Naive thymus-derived CD4-positive, alpha-beta T cell (primary cell): ENCODE measurements at regions of chr7 and their contacts with region 1.

Region 1: GRCh38 chr7:42940985-42941847 is 9.0 kb downstream of the MRPL32 start:
- DNase-seq: peak; percentile 43 to 70 (median 63)
- ATAC-seq: peak; percentile 87
- H3K4me3 ChIP-seq: no peak overlapping the region
- H3K4me3 Mint-ChIP-seq: no peak overlapping the region
- H3K27ac ChIP-seq: no peak overlapping the region
- H3K27ac Mint-ChIP-seq: no peak overlapping the region
- H3K4me1 ChIP-seq: peaks cover 0 to 3% of the 10 kb centered on the region in 2 donors
- H3K4me1 Mint-ChIP-seq: peaks cover 1 to 26% (median 9%) of the 10 kb centered on the region in 7 donors
- H3K27me3 ChIP-seq: no peaks in the 10 kb centered on the region
- H3K27me3 Mint-ChIP-seq: peaks cover 0 to 5% (median 0%) of the 10 kb centered on the region in 5 donors

Region 2: GRCh38 chr7:43004082-43004481 is 62.9 kb after region 1 on chr7:
- CTCF ChIA-PET with region 1: no interaction called
- POLR2A ChIA-PET with region 1: no interaction called
- intact Hi-C with region 1: no loop called
- DNase-seq: peak in 2 of 9 donors; percentile 2 to 7
- ATAC-seq: no peak
- H3K4me3 ChIP-seq: no peak overlapping the region
- H3K4me3 Mint-ChIP-seq: peak overlapping the region in 1 of 10 donors; percentile 2
- H3K27ac ChIP-seq: no peak overlapping the region
- H3K27ac Mint-ChIP-seq: no peak overlapping the region
- H3K4me1 ChIP-seq: no peaks in the 10 kb centered on the region
- H3K4me1 Mint-ChIP-seq: peaks cover 0 to 7% (median 4%) of the 10 kb centered on the region in 7 donors
- H3K27me3 ChIP-seq: no peaks in the 10 kb centered on the region
- H3K27me3 Mint-ChIP-seq: peaks cover 11 to 37% (median 25%) of the 10 kb centered on the region in 5 donors

Region 3: GRCh38 chr7:43108255-43109011 is 167.2 kb after region 1 on chr7:
- CTCF ChIA-PET with region 1: no interaction called
- POLR2A ChIA-PET with region 1: no interaction called
- intact Hi-C with region 1: loop called in 1 of 2 experiments (anchors 1 kb)
- DNase-seq: peak in 3 of 9 donors; percentile 8 to 59 (median 11)
- ATAC-seq: peak; percentile 44
- H3K4me3 ChIP-seq: no peak overlapping the region
- H3K4me3 Mint-ChIP-seq: no peak overlapping the region
- H3K27ac ChIP-seq: no peak overlapping the region
- H3K27ac Mint-ChIP-seq: peak overlapping the region in 1 of 9 donors; percentile 26
- H3K4me1 ChIP-seq: no peaks in the 10 kb centered on the region
- H3K4me1 Mint-ChIP-seq: peaks cover 0 to 12% (median 5%) of the 10 kb centered on the region in 7 donors
- H3K27me3 ChIP-seq: peaks cover 0 to 5% of the 10 kb centered on the region in 2 donors
- H3K27me3 Mint-ChIP-seq: peaks cover 59 to 67% (median 61%) of the 10 kb centered on the region in 5 donors

Region 4: DNA sequence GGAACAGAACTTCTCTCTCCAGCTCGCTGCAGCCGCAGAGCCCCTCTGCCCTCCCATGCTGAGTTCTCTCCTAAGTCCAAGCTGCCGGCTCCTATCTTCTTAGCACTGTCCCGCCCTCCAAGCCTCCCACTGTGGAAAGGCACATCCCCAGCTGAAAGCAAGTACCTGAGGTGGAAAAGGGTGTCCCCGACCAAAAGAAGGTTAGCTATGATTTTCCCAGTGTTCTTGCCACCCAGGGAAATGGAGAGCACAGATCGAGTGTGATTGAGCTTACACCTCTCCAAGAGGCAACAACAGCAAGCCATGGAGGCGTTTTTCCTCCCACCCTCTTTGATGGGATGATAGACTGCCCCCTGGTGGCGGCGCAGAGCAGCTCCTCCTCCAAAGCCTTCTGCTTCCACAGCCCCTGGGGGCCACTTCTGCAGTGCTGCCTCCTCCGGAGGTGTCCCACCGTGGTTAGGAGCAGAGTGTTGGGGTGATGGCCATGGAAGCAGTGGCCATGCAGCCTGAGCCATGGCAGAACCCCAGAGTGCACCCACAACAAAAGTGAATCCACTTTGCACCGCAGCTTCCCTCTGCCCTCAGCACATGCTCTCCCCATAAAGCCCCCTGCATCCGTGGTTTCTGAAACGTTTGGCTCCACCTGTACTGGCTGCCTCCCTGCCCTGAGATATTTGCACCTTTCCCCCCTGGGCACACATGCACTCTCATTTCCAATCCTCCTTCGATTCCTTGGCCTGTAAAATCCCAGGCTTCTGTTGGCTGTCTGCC is 498.6 kb after region 1 on chr7:
- CTCF ChIA-PET with region 1: no interaction called
- POLR2A ChIA-PET with region 1: no interaction called
- intact Hi-C with region 1: loop called (anchors 1 to 10 kb)
- DNase-seq: peak in 6 of 9 donors; percentile 3 to 65 (median 18)
- ATAC-seq: peak; percentile 76
- H3K4me3 ChIP-seq: no peak overlapping the region
- H3K4me3 Mint-ChIP-seq: no peak overlapping the region
- H3K27ac ChIP-seq: no peak overlapping the region
- H3K27ac Mint-ChIP-seq: no peak overlapping the region
- H3K4me1 ChIP-seq: no peaks in the 10 kb centered on the region
- H3K4me1 Mint-ChIP-seq: peaks cover 0 to 4% (median 2%) of the 10 kb centered on the region in 7 donors
- H3K27me3 ChIP-seq: no peaks in the 10 kb centered on the region
- H3K27me3 Mint-ChIP-seq: peaks cover 0 to 7% (median 0%) of the 10 kb centered on the region in 5 donors

Region 5: DNA sequence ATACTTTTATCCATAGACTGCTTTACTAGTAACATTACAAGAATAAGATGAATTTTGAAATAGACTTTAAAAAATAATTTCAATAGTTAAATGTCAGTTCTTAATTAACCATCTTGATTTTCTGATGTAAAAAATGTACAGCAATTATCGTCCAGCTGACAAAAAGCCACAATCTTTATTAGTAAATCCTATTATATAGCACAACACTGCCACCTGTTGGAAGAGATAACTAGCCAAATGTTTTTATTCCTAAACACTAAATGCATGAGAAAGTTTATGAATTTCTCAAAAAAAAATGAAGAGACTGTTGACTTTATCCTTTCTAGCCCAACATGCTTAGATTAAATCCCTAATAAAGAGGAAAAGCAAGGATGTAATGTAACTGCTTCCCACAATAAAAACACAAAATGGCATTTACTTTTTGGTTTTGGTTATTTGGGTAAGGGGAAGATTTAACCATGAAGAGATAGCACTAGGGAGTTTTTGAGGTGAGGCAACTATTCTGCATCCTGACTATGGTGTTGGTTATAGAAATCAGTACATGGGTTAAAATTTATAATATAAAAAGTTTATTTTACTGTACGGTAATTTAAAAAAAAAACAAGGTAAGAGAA is 780.1 kb after region 1 on chr7:
- CTCF ChIA-PET with region 1: interaction called, 4 read pairs
- POLR2A ChIA-PET with region 1: no interaction called
- intact Hi-C with region 1: loop called (anchors 1 kb)
- DNase-seq: peak in 7 of 9 donors; percentile 44 to 65 (median 54)
- ATAC-seq: peak; percentile 61
- H3K4me3 ChIP-seq: no peak overlapping the region
- H3K4me3 Mint-ChIP-seq: no peak overlapping the region
- H3K27ac ChIP-seq: no peak overlapping the region
- H3K27ac Mint-ChIP-seq: peak overlapping the region in 3 of 9 donors; percentile 18 to 79 (median 77)
- H3K4me1 ChIP-seq: peaks cover 0 to 4% of the 10 kb centered on the region in 2 donors
- H3K4me1 Mint-ChIP-seq: peaks cover 22 to 73% (median 57%) of the 10 kb centered on the region in 7 donors
- H3K27me3 ChIP-seq: no peaks in the 10 kb centered on the region
- H3K27me3 Mint-ChIP-seq: no peaks in the 10 kb centered on the region

Region 6: DNA sequence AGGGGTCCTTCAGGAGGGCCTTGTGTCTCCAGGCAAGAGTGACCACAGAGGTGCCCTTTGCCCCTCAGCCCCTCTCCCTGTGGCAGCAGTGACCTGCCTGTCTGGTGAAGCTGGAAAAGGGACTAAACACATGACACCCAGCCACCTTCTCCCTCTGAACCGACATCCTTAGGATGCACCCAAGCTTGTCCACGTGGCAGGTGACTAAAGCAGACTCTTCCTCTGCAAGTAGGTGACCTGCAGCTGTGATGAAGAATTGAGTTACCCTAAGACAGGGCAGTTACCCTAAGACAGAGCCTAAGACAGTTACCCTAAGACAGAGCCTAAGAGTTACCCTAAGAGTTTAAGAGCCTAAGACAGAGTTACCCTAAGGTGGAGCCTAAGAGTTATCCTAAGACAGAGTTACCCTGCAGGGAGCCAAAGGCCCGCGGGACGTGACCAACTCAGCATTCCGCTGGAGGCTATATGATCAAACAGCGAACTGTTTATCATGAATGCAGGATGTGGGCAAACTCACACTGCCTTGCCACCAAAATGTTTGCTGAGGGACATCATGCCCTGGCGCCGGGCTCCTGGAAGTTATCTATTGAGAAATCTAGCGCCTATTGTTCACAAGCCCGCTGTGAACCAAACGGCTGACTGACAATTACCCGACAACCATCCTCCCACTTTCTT is 867.1 kb after region 1 on chr7:
- CTCF ChIA-PET with region 1: interaction called, 3 read pairs
- POLR2A ChIA-PET with region 1: no interaction called
- intact Hi-C with region 1: loop called in 1 of 2 experiments (anchors 1 kb)
- DNase-seq: no peak
- ATAC-seq: peak; percentile 41
- H3K4me3 ChIP-seq: no peak overlapping the region
- H3K4me3 Mint-ChIP-seq: peak overlapping the region in 2 of 10 donors; percentile 10 to 43
- H3K27ac ChIP-seq: no peak overlapping the region
- H3K27ac Mint-ChIP-seq: peak overlapping the region in 2 of 9 donors; percentile 38
- H3K4me1 ChIP-seq: peaks cover 0 to 9% of the 10 kb centered on the region in 2 donors
- H3K4me1 Mint-ChIP-seq: peaks cover 0 to 6% (median 0%) of the 10 kb centered on the region in 7 donors
- H3K27me3 ChIP-seq: no peaks in the 10 kb centered on the region
- H3K27me3 Mint-ChIP-seq: peaks cover 0 to 8% (median 4%) of the 10 kb centered on the region in 5 donors